Psoas muscle (tissue), 8 donors: ENCODE measurements at regions of chr16 and their contacts with region 1.

Region 1: DNA sequence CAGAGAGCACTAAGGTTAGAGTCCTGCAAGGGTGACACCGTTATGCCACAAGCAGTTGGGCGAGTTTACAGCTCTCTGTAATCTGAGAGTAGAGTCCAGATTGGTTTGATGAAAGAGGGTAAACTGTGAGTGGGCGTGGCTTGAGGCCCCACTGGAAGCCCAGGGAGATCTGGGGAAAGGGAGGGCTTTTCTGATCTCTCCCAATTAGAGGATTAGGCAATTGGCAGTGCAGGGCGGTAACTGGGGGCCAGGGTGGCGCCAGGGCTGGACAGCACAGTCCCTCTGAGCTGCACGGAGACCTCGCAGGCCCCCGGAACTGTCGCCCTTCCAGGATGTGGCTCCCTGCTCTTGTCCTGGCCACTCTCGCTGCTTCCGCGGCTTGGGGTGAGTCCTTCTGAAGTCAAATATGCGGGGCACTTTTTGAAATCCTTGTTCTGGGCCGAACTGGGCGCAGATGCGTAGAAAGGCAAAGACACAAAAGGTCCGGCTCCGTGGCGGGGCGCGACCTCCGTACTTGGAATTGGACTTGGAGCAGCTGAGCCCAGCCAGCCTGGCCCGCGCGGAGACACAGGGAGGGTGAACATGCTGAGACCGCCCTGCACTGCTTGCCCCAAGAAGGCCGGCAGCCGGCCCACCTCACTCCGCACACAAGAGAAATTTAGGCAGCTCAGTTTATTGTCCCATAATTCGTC is 72.4 kb downstream of the CES1 start:
- DNase-seq: peak; percentile 14 to 62
- ATAC-seq: peak; percentile 54 to 76 (median 61)
- H3K4me3 ChIP-seq: peak overlapping the region; percentile 61
- H3K27ac ChIP-seq: no peak overlapping the region
- H3K4me1 ChIP-seq: no peaks in the 10 kb centered on the region
- H3K27me3 ChIP-seq: no peaks in the 10 kb centered on the region
- CTCF ChIP-seq: no peak

Region 2: GRCh38 chr16:55613613-55614335 is 146.7 kb before region 1 on chr16:
- intact Hi-C with region 1: no loop called
- DNase-seq: no peak
- ATAC-seq: no peak
- H3K4me3 ChIP-seq: no peak overlapping the region
- H3K27ac ChIP-seq: no peak overlapping the region
- H3K4me1 ChIP-seq: no peaks in the 10 kb centered on the region
- H3K27me3 ChIP-seq: no peaks in the 10 kb centered on the region
- CTCF ChIP-seq: no peak

Region 3: GRCh38 chr16:55834049-55834448 is 73.6 kb after region 1 on chr16:
- intact Hi-C with region 1: loop called in 1 of 2 experiments (anchors 2 kb)
- DNase-seq: no peak
- ATAC-seq: no peak
- H3K4me3 ChIP-seq: no peak overlapping the region
- H3K27ac ChIP-seq: no peak overlapping the region
- H3K4me1 ChIP-seq: no peaks in the 10 kb centered on the region
- H3K27me3 ChIP-seq: no peaks in the 10 kb centered on the region
- CTCF ChIP-seq: no peak